Activated T-helper 1 cell treated with anti-CD3 and anti-CD28 coated beads, Interleukin-12 subunit alpha, Interleukin-12 subunit beta, Interleukin-2, Interleukin-4 antibody, amounts not matched to agents 30 ng/mL and 10 ng/mL and 1 ng/mL, durations not matched to agents 14 hours and 24 hours and 36 hours (primary cell): ENCODE measurements at regions of chr12 and their contacts with region 1.

Region 1: DNA sequence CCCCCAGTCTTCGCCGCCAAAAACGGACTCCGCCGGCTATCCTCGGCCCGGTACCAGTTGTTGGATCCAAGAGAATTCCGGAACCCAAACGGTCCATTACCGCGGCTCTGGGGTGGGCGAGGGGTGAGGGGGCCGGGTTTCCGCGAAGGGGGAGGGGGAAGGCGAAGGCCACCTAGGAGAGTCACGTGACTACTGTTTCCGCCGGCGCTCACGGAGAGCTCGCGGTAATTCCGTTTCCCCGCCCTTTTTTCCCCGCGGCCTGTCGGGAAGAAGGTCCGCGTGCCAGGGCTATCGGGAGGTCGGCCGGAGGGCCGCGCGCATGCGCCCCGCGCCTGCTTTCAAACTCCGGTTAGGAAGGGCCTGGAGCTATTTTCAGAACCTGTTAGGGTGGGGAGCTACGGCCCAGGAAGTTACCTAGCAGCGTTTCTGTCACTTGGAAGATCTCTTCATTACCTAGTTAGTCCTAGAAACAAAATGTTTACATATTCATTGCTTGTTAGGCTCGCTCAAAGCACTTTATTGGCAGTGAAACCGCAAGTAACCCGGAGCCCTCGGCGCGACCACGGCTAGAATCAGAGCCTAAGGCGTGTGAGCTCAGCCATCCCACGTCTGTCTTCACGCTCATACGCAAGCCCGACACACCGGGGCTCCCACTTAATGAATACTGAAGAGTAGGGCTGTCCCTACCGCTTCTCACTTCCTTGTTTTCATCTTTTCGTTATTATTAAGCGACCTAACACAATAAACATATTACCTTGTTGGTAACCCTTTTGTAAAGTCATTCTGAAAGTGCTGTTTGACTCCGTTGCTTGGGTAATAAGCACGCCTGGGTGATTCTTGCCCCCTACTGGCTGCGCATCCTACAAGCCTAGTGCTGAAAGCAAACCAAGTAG is 624 bp upstream of the SBNO1 start:
- DNase-seq: peak; percentile 97
- H3K4me3 Mint-ChIP-seq: peak overlapping the region; percentile 82
- H3K27ac Mint-ChIP-seq: peak overlapping the region; percentile 96
- H3K4me1 Mint-ChIP-seq: peaks cover 19% of the 10 kb centered on the region
- H3K27me3 Mint-ChIP-seq: no peaks in the 10 kb centered on the region

Region 2: GRCh38 chr12:122965851-122966722 is 399.2 kb before region 1 on chr12 and contains the start of gene ABCB9:
- intact Hi-C with region 1: loop called (anchors 2 kb)
- DNase-seq: peak; percentile 84
- H3K4me3 Mint-ChIP-seq: peak within 1 kb of the TSS; percentile 37
- H3K27ac Mint-ChIP-seq: no peak within 1 kb of the TSS
- H3K4me1 Mint-ChIP-seq: peaks cover 12% of the 10 kb centered on the region
- H3K27me3 Mint-ChIP-seq: peaks cover 16% of the 10 kb centered on the region
- total RNA-seq, gene ABCB9: 3.8 and 4.4 TPM in 2 replicates

Region 3: GRCh38 chr12:123232807-123233543 is 132.3 kb before region 1 on chr12 and contains the starts of genes MPHOSPH9 and MTRFR:
- intact Hi-C with region 1: loop called (anchors 1 kb)
- DNase-seq: peak; percentile 99
- H3K4me3 Mint-ChIP-seq: peak within 1 kb of the TSS; percentile 100
- H3K27ac Mint-ChIP-seq: peak within 1 kb of the TSS; percentile 99
- H3K4me1 Mint-ChIP-seq: peaks cover 68% of the 10 kb centered on the region
- H3K27me3 Mint-ChIP-seq: peaks cover 2% of the 10 kb centered on the region
- total RNA-seq, gene MPHOSPH9: 87.3 and 89.9 TPM in 2 replicates
- total RNA-seq, gene MTRFR: 32.6 and 34.2 TPM in 2 replicates

Region 4: DNA sequence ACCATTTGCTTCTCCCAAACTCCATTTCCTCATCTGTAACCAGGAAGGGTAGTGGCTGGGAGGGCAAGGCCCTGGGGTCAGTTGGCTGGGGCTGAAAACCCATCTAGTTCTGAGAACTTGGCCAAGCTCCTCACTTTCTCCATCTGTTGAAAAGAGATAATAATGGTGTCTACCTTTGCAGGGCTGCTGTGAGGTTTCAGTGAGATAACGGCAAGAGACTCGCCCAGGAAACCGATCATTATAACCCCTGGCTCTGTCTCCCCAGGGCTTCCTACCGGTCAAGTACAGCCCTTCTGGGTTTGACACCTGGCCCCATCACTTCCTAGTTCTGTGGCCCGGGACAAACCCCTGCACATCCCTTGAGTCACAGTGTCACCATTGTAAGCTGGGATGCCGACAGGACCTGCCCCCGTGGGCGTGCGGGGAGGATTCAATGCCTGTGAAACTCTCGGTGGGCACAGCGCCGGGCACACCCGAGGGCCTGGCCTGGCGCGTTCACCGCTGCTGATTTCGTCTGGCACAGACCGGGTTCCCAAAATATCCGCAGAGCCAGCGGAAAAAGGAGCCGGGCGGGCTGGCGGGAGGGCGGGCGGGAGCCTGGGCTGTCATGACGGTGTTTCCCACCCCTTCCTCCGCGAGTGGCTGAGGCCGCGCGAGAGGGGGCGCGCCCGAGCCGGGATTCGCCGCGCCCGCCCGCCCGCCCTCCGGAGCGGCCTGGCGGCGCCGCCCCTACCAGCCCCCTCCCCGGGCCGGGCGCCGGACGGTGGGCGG is 23.1 kb after region 1 on chr12:
- intact Hi-C with region 1: loop called (anchors 1 kb)
- DNase-seq: peak; percentile 78
- H3K4me3 Mint-ChIP-seq: peak overlapping the region; percentile 82
- H3K27ac Mint-ChIP-seq: peak overlapping the region; percentile 93
- H3K4me1 Mint-ChIP-seq: peaks cover 39% of the 10 kb centered on the region
- H3K27me3 Mint-ChIP-seq: no peaks in the 10 kb centered on the region

Region 5: GRCh38 chr12:123580772-123581171 is 215.5 kb after region 1 on chr12:
- intact Hi-C with region 1: loop called (anchors 1 kb)
- DNase-seq: no peak
- H3K4me3 Mint-ChIP-seq: no peak overlapping the region
- H3K27ac Mint-ChIP-seq: no peak overlapping the region
- H3K4me1 Mint-ChIP-seq: peaks cover 18% of the 10 kb centered on the region
- H3K27me3 Mint-ChIP-seq: no peaks in the 10 kb centered on the region

Region 6: DNA sequence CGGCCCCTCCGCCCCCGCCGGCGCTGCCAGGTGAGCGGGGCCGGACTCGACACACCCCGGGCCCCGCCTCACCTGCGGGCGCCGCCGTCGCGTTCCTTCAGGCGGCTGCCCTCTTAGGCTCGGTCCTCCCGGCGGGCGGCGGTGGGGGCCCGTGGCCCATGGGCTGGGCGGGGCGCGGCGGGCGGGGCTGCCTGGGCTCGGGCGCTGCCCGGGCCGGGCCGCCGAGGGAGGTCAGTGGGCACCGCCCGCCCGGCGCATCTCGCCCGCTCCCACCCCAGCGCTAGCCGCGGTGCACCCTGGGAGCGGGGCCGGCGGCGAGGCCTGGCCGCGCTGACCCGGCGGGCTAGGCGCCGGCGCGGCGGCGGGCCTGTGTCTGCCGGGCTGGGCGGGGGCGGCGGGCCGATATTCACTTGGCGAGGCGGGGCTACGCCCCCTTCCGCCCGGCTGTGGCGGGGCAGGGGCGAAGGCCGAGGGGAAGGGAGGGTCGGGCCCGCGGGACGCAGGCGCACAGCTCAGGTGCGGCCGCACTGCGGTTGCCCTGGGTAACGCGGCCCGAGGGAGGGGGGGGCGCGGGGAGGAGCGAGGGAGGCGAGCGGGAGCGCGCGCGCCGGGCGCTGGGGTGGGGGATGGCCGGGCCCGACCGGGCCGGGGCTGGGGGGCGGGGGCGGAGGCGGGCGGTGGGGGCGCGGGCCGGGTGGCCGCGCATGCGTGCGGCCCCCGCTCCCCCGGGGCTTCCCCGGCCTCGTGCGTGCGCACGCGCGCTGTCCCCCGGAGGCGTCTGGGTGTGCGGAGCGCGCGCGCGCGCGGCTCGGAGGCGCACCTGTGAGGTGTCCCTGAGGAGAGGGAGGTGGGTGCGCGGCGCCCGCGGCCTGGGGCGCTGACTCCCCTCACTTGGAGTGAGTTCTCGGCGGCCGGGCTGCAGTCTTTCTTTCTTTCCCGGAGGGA is 607.5 kb after region 1 on chr12 and contains the starts of genes CCDC92 and ZNF664:
- intact Hi-C with region 1: loop called (anchors 2 kb)
- DNase-seq: peak; percentile 91
- H3K4me3 Mint-ChIP-seq: peak within 1 kb of the TSS; percentile 91
- H3K27ac Mint-ChIP-seq: peak within 1 kb of the TSS; percentile 78
- H3K4me1 Mint-ChIP-seq: peaks cover 53% of the 10 kb centered on the region
- H3K27me3 Mint-ChIP-seq: peaks cover 15% of the 10 kb centered on the region
- total RNA-seq, gene CCDC92: 7.7 and 8.3 TPM in 2 replicates
- total RNA-seq, gene ZNF664: 66.9 and 68.1 TPM in 2 replicates